ENCODE measurements at regions of chr19 and their contacts with region 1.

Region 1: DNA sequence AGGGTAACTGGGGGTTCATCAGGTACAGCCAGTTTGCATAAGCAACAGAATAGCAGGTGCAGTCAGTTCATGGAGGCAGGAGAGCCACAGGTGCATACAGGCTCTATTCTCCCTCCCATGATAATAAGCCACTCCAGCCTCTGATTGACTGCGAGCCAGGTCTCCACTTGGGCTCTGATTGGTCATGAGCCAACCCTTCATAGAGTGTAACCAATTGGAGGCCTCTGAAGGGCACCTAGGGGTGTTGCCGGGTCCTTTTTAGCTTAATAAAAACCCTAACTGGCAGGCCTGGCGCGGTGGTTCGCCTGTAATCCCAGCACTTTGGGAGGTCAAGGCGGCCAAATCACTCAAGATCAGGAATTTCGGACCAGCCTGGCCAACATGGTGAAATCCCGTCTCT is 8.7 kb upstream of the CKM start:
- DNase-seq: no peak
- H3K4me3 ChIP-seq: no peak overlapping the region
- H3K27ac ChIP-seq: no peak overlapping the region
- H3K4me1 ChIP-seq: no peaks in the 10 kb centered on the region
- H3K27me3 ChIP-seq: no peaks in the 10 kb centered on the region
- CTCF ChIP-seq: no peak

Region 2: GRCh38 chr19:44960906-44961728 is 370.3 kb before region 1 on chr19:
- CTCF ChIA-PET with region 1: interaction called, 10 read pairs
- POLR2A ChIA-PET with region 1: no interaction called
- intact Hi-C with region 1: no loop called
- DNase-seq: no peak
- H3K4me3 ChIP-seq: no peak overlapping the region
- H3K27ac ChIP-seq: no peak overlapping the region
- H3K4me1 ChIP-seq: peaks cover 5% of the 10 kb centered on the region
- H3K27me3 ChIP-seq: no peaks in the 10 kb centered on the region
- CTCF ChIP-seq: no peak

Region 3: DNA sequence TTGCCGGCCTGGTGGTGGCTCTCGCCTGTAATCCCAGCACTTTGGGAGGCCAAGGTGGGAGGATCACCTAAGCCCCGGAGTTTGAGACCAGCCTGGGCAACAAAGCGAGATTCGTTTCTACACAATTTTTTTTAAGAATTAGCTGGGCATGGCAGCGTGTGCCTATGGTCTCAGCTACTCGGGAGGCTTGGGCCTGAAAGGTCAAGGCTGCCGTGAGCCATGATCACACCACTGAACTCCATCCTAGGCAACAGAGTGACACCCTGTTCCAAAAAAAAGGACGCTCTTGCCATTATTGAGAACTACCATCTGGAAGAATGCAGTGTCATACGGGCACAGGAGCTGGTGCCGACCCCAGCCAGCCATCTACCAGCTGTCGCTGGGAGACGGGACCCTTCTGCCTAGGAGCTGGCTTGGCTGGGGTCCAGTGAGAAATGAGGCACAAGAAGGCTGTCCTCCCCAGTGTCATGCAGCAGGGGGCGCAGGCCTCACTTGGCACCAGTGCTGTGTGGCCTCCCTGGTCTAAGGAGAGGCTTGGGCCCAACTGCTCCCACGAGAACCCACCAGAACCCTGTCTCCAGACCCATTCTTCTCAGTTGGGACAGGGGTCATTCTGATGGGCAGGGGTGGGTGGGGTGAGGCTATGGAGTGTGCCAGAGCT is 342.4 kb before region 1 on chr19:
- CTCF ChIA-PET with region 1: interaction called, 18 read pairs
- POLR2A ChIA-PET with region 1: no interaction called
- intact Hi-C with region 1: no loop called
- DNase-seq: peak; percentile 81
- H3K4me3 ChIP-seq: no peak overlapping the region
- H3K27ac ChIP-seq: no peak overlapping the region
- H3K4me1 ChIP-seq: no peaks in the 10 kb centered on the region
- H3K27me3 ChIP-seq: no peaks in the 10 kb centered on the region
- CTCF ChIP-seq: peak; percentile 74

Region 4: DNA sequence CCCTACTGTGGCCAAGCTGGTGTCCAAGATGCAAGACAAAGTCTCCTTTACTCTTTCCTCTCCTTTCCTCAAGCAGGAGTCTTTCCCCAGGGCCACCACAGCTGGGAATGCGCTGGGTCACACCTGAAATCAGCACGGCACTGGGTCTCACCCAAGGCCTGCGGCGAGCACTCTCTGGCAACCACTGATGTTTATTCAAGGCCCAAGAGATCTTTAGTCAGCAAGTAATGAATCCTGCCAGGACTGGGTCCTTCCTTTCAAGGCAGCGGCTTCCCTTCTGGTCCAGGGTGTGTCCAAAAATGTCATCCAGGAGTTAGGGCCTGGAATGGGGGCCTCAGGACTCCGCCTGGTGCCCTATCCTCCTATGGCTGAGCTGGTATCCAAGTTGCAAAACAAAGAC is 128.8 kb before region 1 on chr19:
- CTCF ChIA-PET with region 1: no interaction called
- POLR2A ChIA-PET with region 1: no interaction called
- intact Hi-C with region 1: no loop called
- DNase-seq: no peak
- H3K4me3 ChIP-seq: no peak overlapping the region
- H3K27ac ChIP-seq: no peak overlapping the region
- H3K4me1 ChIP-seq: no peaks in the 10 kb centered on the region
- H3K27me3 ChIP-seq: no peaks in the 10 kb centered on the region
- CTCF ChIP-seq: no peak

Region 5: GRCh38 chr19:45352914-45353796 is 21.7 kb after region 1 on chr19:
- CTCF ChIA-PET with region 1: no interaction called
- POLR2A ChIA-PET with region 1: no interaction called
- intact Hi-C with region 1: no loop called
- DNase-seq: no peak
- H3K4me3 ChIP-seq: no peak overlapping the region
- H3K27ac ChIP-seq: no peak overlapping the region
- H3K4me1 ChIP-seq: no peaks in the 10 kb centered on the region
- H3K27me3 ChIP-seq: no peaks in the 10 kb centered on the region
- CTCF ChIP-seq: no peak

Region 6: GRCh38 chr19:45363861-45364459 is 32.5 kb after region 1 on chr19:
- CTCF ChIA-PET with region 1: no interaction called
- POLR2A ChIA-PET with region 1: interaction called, 21 read pairs
- intact Hi-C with region 1: no loop called
- DNase-seq: no peak
- H3K4me3 ChIP-seq: no peak overlapping the region
- H3K27ac ChIP-seq: no peak overlapping the region
- H3K4me1 ChIP-seq: peaks cover 1% of the 10 kb centered on the region
- H3K27me3 ChIP-seq: no peaks in the 10 kb centered on the region
- CTCF ChIP-seq: no peak

Measured in A673 (cell line).